Activated T-helper 1 cell treated with anti-CD3 and anti-CD28 coated beads, Interleukin-12 subunit alpha, Interleukin-12 subunit beta, Interleukin-2, Interleukin-4 antibody, amounts not matched to agents 30 ng/mL and 10 ng/mL and 1 ng/mL, durations not matched to agents 14 hours and 24 hours and 36 hours (primary cell): ENCODE measurements at regions of chr1 and their contacts with region 1.

Region 1: DNA sequence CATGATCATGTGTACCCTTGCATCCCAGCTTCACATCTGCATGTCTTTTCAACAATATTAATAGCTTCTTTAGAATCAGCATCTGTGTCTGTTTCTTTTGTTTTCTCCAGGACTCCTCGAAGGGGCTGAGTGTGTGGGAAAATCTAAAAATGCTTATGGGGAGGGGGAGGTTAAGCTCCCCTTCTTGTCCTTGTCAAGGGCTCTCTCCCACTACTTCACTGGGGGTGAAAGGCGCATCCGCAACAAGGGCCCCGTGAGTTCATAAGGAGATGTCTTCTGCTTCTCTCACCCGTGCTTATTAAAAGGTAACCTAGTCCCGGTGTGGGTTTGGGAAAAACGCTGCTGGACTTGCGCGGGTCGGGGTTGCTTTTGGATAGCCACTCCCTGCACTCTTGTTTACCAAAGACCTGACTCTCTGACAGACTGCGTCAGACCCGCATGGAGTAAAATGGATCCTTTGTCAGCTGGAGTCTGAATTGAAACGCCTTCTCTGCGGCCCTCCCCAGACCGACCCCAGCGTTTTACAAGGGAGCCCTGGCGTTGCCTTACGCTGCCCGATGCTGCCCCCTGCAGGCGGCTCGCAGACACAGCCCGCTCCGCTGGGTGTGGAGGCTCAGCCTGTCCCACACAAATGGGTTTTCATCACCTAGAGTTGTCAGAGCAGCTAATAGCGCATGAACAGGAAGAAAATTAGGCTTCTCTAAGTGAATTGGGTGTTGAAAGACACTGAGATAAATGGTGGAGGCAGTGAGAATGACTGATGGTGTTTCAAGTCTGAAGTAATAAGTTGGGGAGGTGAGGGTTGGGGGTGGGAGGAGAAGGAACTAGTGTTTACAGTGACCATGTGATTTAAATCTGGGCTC is 53.8 kb downstream of the IER5 start:
- DNase-seq: peak; percentile 81
- H3K4me3 Mint-ChIP-seq: peak overlapping the region; percentile 58
- H3K27ac Mint-ChIP-seq: peak overlapping the region; percentile 84
- H3K4me1 Mint-ChIP-seq: peaks cover 64% of the 10 kb centered on the region
- H3K27me3 Mint-ChIP-seq: peaks cover 18% of the 10 kb centered on the region

Region 2: DNA sequence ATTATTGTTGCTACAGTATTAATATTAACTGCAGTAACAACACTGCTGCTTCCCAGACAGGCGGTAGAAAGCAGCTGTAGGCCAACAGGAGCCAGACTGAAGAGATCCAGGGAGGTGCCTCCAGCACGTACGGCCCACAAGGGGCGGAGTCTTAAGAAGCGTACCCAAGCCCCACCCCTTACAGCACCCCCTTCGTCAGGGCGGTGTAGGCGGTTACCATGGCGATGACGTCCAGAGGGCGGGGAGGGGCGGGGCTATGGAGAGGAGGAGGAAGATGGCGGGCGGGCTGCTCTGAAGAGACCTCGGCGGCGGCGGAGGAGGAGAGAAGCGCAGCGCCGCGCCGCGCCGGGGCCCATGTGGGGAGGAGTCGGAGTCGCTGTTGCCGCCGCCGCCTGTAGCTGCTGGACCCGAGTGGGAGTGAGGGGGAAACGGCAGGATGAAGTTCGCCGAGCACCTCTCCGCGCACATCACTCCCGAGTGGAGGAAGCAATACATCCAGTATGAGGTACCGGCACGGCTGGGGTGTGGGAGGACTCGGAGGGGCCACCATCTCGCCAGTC is 510.5 kb before region 1 on chr1 and contains the start of gene XPR1:
- intact Hi-C with region 1: loop called (anchors 1 kb)
- DNase-seq: peak; percentile 91
- H3K4me3 Mint-ChIP-seq: peak within 1 kb of the TSS; percentile 87
- H3K27ac Mint-ChIP-seq: peak within 1 kb of the TSS; percentile 87
- H3K4me1 Mint-ChIP-seq: peaks cover 8% of the 10 kb centered on the region
- H3K27me3 Mint-ChIP-seq: peaks cover 5% of the 10 kb centered on the region
- total RNA-seq, gene XPR1: 21.1 and 21.2 TPM in 2 replicates

Region 3: GRCh38 chr1:181014477-181015250 is 127.7 kb before region 1 on chr1:
- intact Hi-C with region 1: loop called (anchors 1 kb)
- DNase-seq: no peak
- H3K4me3 Mint-ChIP-seq: no peak overlapping the region
- H3K27ac Mint-ChIP-seq: no peak overlapping the region
- H3K4me1 Mint-ChIP-seq: peaks cover 44% of the 10 kb centered on the region
- H3K27me3 Mint-ChIP-seq: no peaks in the 10 kb centered on the region

Region 4: DNA sequence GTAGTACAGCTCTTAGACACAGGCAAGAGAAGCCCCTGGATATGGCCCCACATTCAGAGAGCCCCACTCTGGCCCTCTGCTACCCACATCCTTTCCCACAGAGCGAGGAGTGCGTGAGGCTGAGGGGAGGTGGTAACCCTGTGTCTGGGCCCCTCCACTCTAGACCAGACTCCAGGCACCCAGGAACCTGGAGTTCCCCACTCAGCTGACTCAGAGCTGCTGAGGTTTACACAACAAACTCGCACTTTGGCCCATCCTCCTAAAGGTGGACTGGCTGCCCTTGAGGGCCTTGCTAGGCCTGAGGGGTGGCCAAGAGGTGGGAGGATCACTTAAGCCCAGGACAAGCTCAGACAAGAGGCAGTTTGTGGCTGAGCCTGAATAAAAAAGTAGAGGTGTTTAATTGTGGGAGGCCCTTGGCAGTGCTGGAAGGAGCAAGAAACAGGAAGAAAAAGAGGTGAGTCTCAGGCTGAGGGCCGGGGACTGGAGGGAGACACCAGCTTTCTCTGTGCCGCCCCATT is 97.8 kb before region 1 on chr1:
- intact Hi-C with region 1: loop called (anchors 1 kb)
- DNase-seq: peak; percentile 63
- H3K4me3 Mint-ChIP-seq: peak overlapping the region; percentile 79
- H3K27ac Mint-ChIP-seq: peak overlapping the region; percentile 96
- H3K4me1 Mint-ChIP-seq: peaks cover 49% of the 10 kb centered on the region
- H3K27me3 Mint-ChIP-seq: no peaks in the 10 kb centered on the region

Region 5: DNA sequence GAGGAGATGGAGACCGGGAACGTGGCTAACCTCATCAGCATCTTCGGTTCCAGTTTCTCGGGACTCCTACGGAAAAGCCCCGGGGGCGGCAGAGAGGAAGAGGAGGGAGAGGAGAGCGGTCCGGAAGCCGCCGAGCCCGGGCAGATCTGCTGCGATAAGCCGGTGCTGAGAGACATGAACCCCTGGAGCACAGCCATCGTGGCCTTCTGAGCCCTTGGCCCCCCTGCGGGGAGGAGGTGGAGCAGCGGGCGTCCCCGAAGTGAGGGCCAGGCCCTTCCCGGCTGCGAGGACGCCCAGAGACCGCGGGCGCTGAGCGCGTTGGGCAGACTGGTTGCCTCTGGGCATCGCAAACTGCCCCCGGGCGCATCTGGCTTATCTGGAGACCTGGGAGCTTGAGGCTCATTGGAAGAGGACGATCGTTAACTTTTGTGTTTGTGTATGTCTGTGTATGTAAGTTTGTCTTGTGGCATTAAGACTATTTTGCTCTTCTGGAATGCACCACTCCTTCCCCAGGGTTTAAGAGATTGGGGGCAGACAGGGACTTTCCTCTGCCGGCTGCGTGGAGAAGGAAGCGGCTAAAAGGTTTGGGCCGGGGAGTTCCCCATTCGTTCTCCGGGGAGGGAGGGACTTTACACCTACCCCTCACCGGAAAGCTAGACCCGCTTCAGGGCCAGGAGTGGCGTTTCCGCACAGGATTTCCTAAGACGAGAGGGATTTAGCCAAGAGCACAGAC is 52.5 kb before region 1 on chr1:
- intact Hi-C with region 1: loop called (anchors 1 kb)
- DNase-seq: peak; percentile 78
- H3K4me3 Mint-ChIP-seq: peak overlapping the region; percentile 98
- H3K27ac Mint-ChIP-seq: peak overlapping the region; percentile 95
- H3K4me1 Mint-ChIP-seq: peaks cover 57% of the 10 kb centered on the region
- H3K27me3 Mint-ChIP-seq: peaks cover 5% of the 10 kb centered on the region

Region 6: DNA sequence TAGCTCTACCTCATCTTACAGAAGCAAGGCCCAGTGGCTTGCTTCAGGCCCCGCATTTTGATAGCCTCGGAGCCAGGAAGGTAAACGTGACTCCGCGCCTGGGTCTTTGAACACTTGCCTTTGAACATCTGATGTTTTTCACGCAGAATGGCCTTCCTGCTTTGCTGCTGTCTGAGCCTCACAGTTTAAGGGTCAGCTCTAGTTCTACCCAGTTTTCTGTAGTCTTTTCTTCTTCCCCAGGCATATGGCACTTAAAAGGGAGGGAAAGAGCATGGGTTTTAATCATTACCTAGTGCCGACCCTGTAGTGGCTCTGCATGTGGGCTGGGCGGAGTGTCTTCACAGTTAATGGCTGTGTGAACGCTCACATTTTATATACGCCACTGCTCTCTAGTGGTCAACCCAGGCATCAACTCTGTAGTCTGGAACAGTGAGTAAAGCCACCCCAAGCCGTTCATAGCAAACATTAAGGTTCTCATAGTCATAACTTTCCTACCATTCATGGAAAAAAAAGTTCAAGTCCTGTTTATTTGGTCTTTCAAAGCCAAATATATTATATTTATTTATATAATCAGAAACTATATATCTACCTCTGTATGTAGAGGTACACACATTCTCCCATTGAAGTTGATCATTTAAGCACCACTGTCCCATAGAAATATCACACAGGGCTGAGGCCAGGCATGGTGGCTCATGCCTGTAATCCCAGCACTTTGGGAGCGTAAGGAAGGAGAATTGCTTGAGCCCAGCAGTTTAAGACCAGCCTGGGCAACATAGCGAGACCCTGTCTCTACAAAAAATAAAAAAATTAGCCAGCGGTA is 24.3 kb after region 1 on chr1:
- intact Hi-C with region 1: loop called (anchors 1 kb)
- DNase-seq: peak; percentile 62
- H3K4me3 Mint-ChIP-seq: no peak overlapping the region
- H3K27ac Mint-ChIP-seq: no peak overlapping the region
- H3K4me1 Mint-ChIP-seq: peaks cover 6% of the 10 kb centered on the region
- H3K27me3 Mint-ChIP-seq: peaks cover 34% of the 10 kb centered on the region